Mucosa of descending colon (tissue), 3 donors: ENCODE measurements at regions of chr9 and their contacts with region 1.

Region 1: GRCh38 chr9:69056191-69056815 is 20.8 kb downstream of the FXN start:
- DNase-seq: no peak
- ATAC-seq: no peak
- H3K4me3 ChIP-seq: no peak overlapping the region
- H3K4me1 ChIP-seq: no peaks in the 10 kb centered on the region
- CTCF ChIP-seq: no peak

Region 2: GRCh38 chr9:69019808-69020207 is 36.5 kb before region 1 on chr9:
- intact Hi-C with region 1: no loop called
- DNase-seq: no peak
- ATAC-seq: peak; percentile 71
- H3K4me3 ChIP-seq: no peak overlapping the region
- H3K4me1 ChIP-seq: no peaks in the 10 kb centered on the region
- CTCF ChIP-seq: no peak

Region 3: DNA sequence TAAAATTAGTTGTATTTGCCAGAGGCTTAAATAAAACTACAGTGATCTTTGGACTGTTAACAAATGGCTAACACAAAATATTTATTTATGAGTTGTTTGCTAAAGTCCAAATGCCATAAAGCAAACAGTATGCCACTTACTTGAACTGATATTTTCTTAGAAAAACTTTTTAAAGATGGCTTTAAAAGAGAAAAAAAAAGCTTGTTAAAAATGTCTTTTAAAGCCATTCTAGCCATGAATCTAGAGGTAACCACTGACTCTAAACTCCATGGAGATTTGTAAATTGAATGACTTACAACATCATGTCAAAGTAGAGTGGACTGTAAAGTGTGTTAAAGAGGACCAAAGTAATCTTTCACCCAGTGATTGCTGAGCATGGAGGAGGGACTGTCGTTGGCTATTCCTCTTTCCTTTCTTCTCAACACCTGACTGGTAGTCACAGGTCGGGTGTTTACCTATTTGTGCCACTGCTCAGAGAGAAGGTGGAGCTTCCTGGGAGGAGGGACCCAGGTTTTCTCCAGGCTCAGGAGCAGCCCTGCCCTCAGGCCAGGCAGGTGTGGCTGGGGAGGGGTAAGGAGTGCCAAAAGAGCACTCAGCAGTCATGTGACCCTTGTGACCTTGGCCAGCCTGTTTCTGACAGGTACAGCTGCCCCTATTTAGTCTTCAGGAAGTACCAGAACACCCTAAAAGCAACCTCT is 48.7 kb after region 1 on chr9:
- intact Hi-C with region 1: loop called in 1 of 2 experiments (anchors 5 kb)
- DNase-seq: peak; percentile 89 to 93 (median 90)
- ATAC-seq: peak; percentile 100
- H3K4me3 ChIP-seq: no peak overlapping the region
- H3K4me1 ChIP-seq: peaks cover 18% of the 10 kb centered on the region
- CTCF ChIP-seq: no peak

Region 4: GRCh38 chr9:69190086-69190862 is 134.0 kb after region 1 on chr9:
- intact Hi-C with region 1: loop called (anchors 2 to 5 kb)
- DNase-seq: no peak
- ATAC-seq: no peak
- H3K4me3 ChIP-seq: no peak overlapping the region
- H3K4me1 ChIP-seq: no peaks in the 10 kb centered on the region
- CTCF ChIP-seq: no peak